Right cardiac atrium (tissue), 5 donors: ENCODE measurements at regions of chr4 and their contacts with region 1.

Region 1: DNA sequence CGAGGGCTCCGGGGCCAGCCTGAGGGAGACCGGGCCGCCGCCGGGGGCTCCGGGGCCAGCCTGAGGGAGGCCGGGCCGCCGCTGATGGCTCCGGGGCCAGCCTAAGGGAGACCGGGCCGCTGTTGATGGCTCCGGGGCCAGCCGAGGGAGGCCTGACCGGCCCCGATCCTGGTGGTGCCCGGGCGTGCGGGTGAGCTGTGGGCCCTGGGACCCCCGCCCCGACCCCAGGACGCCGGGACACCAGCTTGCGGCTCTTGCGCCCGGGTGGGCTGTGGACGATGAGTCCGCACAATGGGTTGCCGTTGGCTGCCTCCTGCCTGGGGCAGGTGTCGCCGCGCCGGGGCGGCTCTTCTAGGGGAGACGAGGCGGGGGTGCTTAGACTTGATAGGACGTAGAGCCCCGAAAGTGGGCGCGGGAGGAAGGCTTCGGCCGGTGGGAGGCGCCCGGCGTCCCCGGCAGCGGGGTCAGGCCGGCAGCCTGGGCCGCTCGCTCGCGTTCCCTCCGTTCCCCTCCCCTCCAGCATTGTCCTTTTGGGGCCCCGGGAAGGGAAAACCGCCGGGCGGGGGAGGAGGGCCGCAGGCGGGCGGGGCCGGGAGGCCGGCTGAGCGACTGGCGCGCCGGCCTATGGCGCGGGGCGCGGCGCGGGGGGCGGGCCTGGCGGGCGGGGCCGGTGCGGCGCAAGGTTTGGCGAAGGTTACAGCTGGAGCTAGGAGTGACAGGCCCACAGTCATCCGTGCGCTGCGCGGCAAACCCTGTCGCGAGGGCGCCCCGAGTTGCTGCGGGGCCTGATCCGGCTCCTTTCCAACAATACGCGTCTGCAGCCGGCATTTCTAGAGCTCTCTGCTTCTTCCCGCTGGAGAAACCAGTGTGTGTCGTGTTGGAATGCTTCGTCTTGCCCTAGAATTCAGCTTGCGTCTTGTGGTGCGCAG is 790 bp downstream of the KIAA0232 start:
- DNase-seq: peak; percentile 93 to 97 (median 97)
- ATAC-seq: peak; percentile 91 to 93
- H3K4me3 ChIP-seq: peak overlapping the region; percentile 90
- H3K27ac ChIP-seq: peak overlapping the region; percentile 98
- H3K4me1 ChIP-seq: peaks cover 5% of the 10 kb centered on the region
- H3K27me3 ChIP-seq: no peaks in the 10 kb centered on the region

Region 2: GRCh38 chr4:6716018-6716911 is 67.1 kb before region 1 on chr4 and contains the start of gene BLOC1S4:
- intact Hi-C with region 1: loop called in 2 of 4 experiments (anchors 5 to 10 kb)
- DNase-seq: peak; percentile 91 to 97 (median 95)
- ATAC-seq: peak; percentile 92 to 94
- H3K4me3 ChIP-seq: peak within 1 kb of the TSS; percentile 41
- H3K27ac ChIP-seq: peak within 1 kb of the TSS; percentile 74
- H3K4me1 ChIP-seq: no peaks in the 10 kb centered on the region
- H3K27me3 ChIP-seq: no peaks in the 10 kb centered on the region
- total RNA-seq, gene BLOC1S4: 7.5 to 9.1 (median 8.4) TPM

Region 3: DNA sequence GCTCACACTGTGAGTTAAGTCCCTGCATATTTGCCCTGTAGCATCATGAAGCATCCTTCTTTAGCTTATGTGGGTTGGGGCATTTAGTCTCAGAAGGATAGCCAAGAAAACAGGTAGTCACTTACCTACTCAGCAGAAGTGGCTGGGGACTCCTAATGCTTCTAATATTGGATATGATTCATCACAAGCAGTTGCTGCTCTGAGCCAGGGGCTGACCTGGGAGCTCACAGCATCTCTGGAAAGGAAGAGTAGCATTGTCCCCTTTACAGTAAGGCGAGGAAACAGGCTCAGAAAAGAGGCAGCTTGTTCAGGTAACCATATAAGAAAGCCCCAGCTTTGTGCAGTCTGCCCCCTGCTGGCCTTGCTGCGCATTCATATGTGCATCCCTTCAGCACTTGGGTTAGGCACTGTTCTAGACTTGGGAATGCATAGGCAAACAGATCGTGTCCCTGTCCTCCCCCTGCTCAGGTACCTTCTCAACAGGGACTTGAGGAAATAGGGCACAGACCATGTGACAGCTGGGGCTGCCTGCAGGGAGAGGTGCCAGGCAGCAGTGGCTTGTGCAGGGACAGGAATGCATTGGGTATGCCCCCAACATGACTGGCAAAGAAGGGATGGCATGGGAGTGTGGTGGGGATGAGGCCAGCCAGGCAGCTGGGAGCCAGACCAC is 90.6 kb after region 1 on chr4:
- intact Hi-C with region 1: loop called in 2 of 4 experiments (anchors 10 kb)
- DNase-seq: peak; percentile 73 to 92 (median 85)
- ATAC-seq: peak; percentile 61 to 77
- H3K4me3 ChIP-seq: no peak overlapping the region
- H3K27ac ChIP-seq: no peak overlapping the region
- H3K4me1 ChIP-seq: peaks cover 4% of the 10 kb centered on the region
- H3K27me3 ChIP-seq: no peaks in the 10 kb centered on the region

Region 4: DNA sequence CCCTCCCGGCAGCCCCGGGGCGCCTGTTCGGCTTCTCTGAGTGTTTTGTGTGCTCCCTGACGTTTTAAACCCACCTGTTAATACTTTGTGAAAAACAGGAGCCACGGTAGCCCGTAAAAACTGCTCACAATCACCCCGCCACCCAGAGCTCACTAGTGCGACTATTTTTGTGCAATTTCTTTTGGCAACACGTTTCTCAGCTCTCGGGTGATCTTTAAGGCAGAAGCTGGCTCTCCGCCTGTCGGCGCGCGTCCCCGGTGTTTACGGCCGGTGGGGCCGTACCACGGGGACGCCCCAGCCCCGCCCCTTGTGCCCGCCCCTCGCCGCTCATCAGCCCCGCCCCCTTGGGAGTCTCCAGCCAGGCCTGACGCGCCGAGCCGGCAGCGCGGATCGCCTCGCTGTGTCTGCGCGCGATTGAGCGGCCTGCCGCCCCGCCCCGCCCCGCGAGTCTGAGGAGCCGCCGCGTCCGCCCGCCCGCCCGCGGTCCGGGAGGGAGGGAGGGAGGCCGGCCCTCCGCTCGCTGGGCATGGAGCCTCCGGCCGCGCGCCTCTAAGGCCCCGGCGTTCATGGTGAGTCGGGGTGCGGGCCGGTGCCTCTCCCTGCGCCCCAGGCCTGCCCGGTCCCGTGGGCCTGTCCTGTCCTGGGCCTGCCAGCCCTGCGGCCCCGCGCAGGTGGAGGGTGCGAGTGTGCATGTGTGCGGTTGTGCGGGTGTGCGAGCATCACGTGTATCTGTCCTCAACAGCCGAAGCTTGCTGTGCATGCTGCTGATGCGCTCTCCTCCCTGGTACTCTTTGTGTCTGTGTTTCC is 203.7 kb after region 1 on chr4:
- intact Hi-C with region 1: loop called in 1 of 4 experiments (anchors 5 kb)
- DNase-seq: peak; percentile 95 to 98 (median 98)
- ATAC-seq: peak; percentile 95 to 96
- H3K4me3 ChIP-seq: peak overlapping the region; percentile 73
- H3K27ac ChIP-seq: peak overlapping the region; percentile 83
- H3K4me1 ChIP-seq: peaks cover 9% of the 10 kb centered on the region
- H3K27me3 ChIP-seq: no peaks in the 10 kb centered on the region